K562 (cell line): ENCODE measurements at regions of chr6 and their contacts with region 1.

Region 1: DNA sequence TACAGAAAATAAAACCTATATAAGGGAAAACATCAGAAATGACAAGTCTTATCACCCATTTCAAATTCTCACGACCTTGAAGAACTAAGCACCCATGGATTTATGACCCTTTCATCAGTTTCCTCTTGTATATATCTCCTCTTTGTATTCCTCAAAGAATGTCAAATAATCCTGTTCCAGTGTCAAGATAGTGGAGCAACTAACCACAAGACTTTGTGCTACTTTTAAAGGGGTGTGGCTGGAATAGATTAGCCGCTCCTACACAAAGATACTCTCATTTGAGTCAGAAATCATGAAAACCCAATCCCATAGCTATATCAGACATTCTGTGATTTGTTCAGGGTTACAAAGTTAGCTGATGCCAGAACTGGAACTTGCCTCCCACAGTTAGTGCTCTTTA is 6.6 kb downstream of the REPS1 start:
- DNase-seq: peak in 2 of 4 experiments; percentile 25 to 38
- ATAC-seq: peak; percentile 33; the same call in 2 of the 3 replicates
- H3K4me3 ChIP-seq: no peak overlapping the region
- H3K27ac ChIP-seq: no peak overlapping the region
- H3K4me1 ChIP-seq: peaks cover 0 to 8% of the 10 kb centered on the region in 2 experiments; a peak in 3 of 5 replicates
- H3K27me3 ChIP-seq: no peaks in the 10 kb centered on the region
- CTCF ChIP-seq: no peak
- EP300 ChIP-seq: no peak
- POLR2A ChIP-seq: no peak
- RAD21 ChIP-seq: no peak

Region 2: DNA sequence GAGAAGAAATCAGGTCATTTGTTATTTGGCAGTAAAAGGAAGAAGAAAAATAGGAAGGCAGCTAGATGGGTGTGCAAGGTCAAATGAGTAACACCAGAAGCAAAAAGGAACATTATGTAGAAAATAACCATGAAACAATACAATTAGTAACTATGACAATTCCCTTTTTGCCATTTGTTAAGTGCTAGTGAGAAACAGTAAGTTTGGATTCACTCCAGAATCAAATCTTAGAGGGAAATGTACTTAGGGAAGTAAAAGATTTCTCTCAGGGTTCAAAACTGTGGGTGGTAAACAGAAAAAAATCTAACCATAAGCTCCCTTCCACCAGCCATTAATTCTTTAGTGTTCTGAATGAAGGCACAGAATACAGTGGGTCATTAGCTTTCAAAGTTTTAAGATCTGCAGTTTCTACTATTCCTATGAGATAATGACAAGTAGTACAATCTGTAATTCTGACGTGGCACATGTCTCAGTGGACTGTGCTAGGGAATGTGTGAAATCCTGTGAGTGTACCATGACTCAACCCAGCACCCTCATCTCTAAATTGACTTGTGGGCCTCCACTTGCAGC is 10.5 kb before region 1 on chr6:
- CTCF ChIA-PET with region 1: no interaction called
- POLR2A ChIA-PET with region 1: interaction called, 22 read pairs
- in situ Hi-C with region 1: no loop called
- intact Hi-C with region 1: no loop called
- DNase-seq: no peak
- ATAC-seq: no peak; the same call in 2 of the 3 replicates
- H3K4me3 ChIP-seq: no peak overlapping the region
- H3K27ac ChIP-seq: no peak overlapping the region
- H3K4me1 ChIP-seq: peaks cover 0 to 6% of the 10 kb centered on the region in 2 experiments; a peak in 1 of 5 replicates
- H3K27me3 ChIP-seq: no peaks in the 10 kb centered on the region
- CTCF ChIP-seq: no peak
- EP300 ChIP-seq: no peak
- POLR2A ChIP-seq: no peak
- RAD21 ChIP-seq: no peak

Region 3: GRCh38 chr6:140101367-140101766 is 1120.0 kb after region 1 on chr6:
- CTCF ChIA-PET with region 1: no interaction called
- POLR2A ChIA-PET with region 1: no interaction called
- in situ Hi-C with region 1: no loop called
- intact Hi-C with region 1: no loop called
- DNase-seq: no peak
- ATAC-seq: no peak
- H3K4me3 ChIP-seq: no peak overlapping the region
- H3K27ac ChIP-seq: no peak overlapping the region
- H3K4me1 ChIP-seq: peaks cover 0 to 3% of the 10 kb centered on the region in 2 experiments; a peak in 2 of 5 replicates
- H3K27me3 ChIP-seq: no peaks in the 10 kb centered on the region
- CTCF ChIP-seq: no peak
- EP300 ChIP-seq: no peak
- POLR2A ChIP-seq: no peak
- RAD21 ChIP-seq: no peak